ENCODE measurements at regions of chr3 and their contacts with region 1.

Region 1: DNA sequence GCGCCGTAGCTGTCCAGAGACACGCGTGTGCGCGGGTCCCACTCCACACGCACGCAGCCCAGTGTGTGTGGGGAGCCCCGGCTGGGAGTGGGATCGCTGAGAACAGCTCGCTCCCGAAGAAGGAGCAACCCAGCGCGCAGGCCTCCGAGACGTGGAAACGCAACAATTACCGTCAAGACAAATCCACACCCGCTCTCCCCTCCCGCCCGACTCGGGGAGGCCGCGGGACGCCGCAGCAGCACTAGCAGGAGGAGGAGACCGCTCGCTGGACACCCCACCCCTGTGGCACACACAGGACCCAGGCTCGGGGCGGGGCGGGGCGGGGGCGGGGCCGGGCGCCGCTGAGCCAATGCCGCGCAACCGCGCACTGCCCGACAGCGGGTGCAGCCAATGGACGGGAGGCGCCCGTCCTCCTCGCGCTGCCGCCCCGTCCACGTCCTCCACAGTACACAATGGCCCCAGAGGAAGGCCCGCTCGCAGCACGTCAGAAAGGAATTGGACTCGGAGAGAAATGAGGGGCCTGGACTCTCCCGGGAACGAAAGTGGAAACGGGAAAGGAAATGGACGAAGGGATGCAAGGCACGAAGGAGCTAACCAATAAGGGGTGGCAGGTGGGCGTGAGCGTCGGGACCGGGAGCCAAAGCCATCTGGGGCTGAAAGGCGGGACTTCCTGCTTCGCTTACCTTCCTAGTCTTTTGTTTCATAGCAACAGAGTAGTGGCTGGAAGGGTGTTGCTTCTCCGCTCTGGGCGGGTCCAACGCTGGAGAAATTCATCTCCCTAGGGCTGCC is at the start of gene CBLB:
- DNase-seq: peak; percentile 93
- ATAC-seq: peak; percentile 90
- H3K4me3 ChIP-seq: peak within 1 kb of the TSS; percentile 72 to 100 (median 97)
- H3K4me3 Mint-ChIP-seq: peak within 1 kb of the TSS; percentile 93
- H3K27ac ChIP-seq: peak within 1 kb of the TSS; percentile 68 to 73
- H3K27ac Mint-ChIP-seq: peak within 1 kb of the TSS; percentile 96
- H3K4me1 ChIP-seq: peaks cover 24 to 32% of the 10 kb centered on the region in 2 donors
- H3K4me1 Mint-ChIP-seq: peaks cover 48% of the 10 kb centered on the region
- H3K27me3 ChIP-seq: no peaks in the 10 kb centered on the region
- H3K27me3 Mint-ChIP-seq: no peaks in the 10 kb centered on the region
- CTCF ChIP-seq: no peak
- total RNA-seq, gene CBLB: 135 and 144 TPM in 2 replicates

Region 2: DNA sequence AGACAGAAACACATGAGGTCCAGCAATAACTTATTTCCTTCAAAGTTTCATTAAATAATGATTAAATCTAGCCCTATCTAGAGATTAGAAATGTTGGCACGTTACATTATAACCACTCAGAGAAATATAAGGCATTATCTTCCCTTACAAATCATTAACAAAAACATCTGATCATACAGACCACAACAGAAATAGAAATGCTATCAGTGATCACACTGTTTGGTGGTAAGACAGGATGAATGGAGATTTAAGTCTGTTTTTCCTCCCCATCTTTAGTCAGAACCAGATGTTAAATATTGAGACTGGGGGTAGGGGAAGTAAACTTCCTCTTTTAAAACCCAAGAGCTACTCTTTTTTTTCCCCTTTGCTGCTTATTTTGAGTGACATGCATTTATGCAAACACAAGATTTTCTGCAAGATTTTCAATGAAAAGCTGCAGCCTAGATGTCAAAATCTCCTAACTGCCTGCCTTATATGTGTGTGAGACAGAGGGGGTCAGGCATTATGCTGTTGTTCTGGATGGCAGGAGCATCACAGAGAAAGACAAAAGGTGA is 70.5 kb before region 1 on chr3:
- CTCF ChIA-PET with region 1: no interaction called
- POLR2A ChIA-PET with region 1: no interaction called
- intact Hi-C with region 1: loop called (anchors 2 kb)
- DNase-seq: peak; percentile 71
- ATAC-seq: peak; percentile 86
- H3K4me3 ChIP-seq: peak overlapping the region in 1 of 5 experiments; percentile 28
- H3K4me3 Mint-ChIP-seq: peak overlapping the region; percentile 66
- H3K27ac ChIP-seq: peak overlapping the region in 1 of 2 donors; percentile 53
- H3K27ac Mint-ChIP-seq: peak overlapping the region; percentile 70
- H3K4me1 ChIP-seq: peaks cover 37 to 61% of the 10 kb centered on the region in 2 donors
- H3K4me1 Mint-ChIP-seq: peaks cover 66% of the 10 kb centered on the region
- H3K27me3 ChIP-seq: no peaks in the 10 kb centered on the region
- H3K27me3 Mint-ChIP-seq: no peaks in the 10 kb centered on the region
- CTCF ChIP-seq: no peak

Region 3: GRCh38 chr3:105812194-105812586 is 56.7 kb before region 1 on chr3:
- CTCF ChIA-PET with region 1: no interaction called
- POLR2A ChIA-PET with region 1: no interaction called
- intact Hi-C with region 1: no loop called
- DNase-seq: no peak
- ATAC-seq: no peak
- H3K4me3 ChIP-seq: no peak overlapping the region
- H3K4me3 Mint-ChIP-seq: no peak overlapping the region
- H3K27ac ChIP-seq: no peak overlapping the region
- H3K27ac Mint-ChIP-seq: no peak overlapping the region
- H3K4me1 ChIP-seq: peaks cover 11 to 12% of the 10 kb centered on the region in 2 donors
- H3K4me1 Mint-ChIP-seq: peaks cover 44% of the 10 kb centered on the region
- H3K27me3 ChIP-seq: no peaks in the 10 kb centered on the region
- H3K27me3 Mint-ChIP-seq: no peaks in the 10 kb centered on the region
- CTCF ChIP-seq: no peak

Region 4: GRCh38 chr3:105853801-105854432 is 15.0 kb before region 1 on chr3:
- CTCF ChIA-PET with region 1: interaction called, 5 read pairs
- POLR2A ChIA-PET with region 1: interaction called, 3 read pairs
- intact Hi-C with region 1: loop called (anchors 1 kb)
- DNase-seq: peak; percentile 91
- ATAC-seq: peak; percentile 99
- H3K4me3 ChIP-seq: peak overlapping the region in 1 of 5 experiments; percentile 5
- H3K4me3 Mint-ChIP-seq: peak overlapping the region; percentile 74
- H3K27ac ChIP-seq: peak overlapping the region; percentile 94 to 95
- H3K27ac Mint-ChIP-seq: peak overlapping the region; percentile 97
- H3K4me1 ChIP-seq: peaks cover 43 to 49% of the 10 kb centered on the region in 2 donors
- H3K4me1 Mint-ChIP-seq: peaks cover 53% of the 10 kb centered on the region
- H3K27me3 ChIP-seq: no peaks in the 10 kb centered on the region
- H3K27me3 Mint-ChIP-seq: no peaks in the 10 kb centered on the region
- CTCF ChIP-seq: peak; percentile 20

Region 5: GRCh38 chr3:106176734-106177133 is 307.8 kb after region 1 on chr3:
- CTCF ChIA-PET with region 1: no interaction called
- POLR2A ChIA-PET with region 1: no interaction called
- intact Hi-C with region 1: loop called (anchors 5 kb)
- DNase-seq: peak; percentile 46
- ATAC-seq: peak; percentile 85
- H3K4me3 ChIP-seq: peak overlapping the region in 4 of 5 experiments; percentile 35 to 44 (median 38)
- H3K4me3 Mint-ChIP-seq: peak overlapping the region; percentile 83
- H3K27ac ChIP-seq: peak overlapping the region; percentile 30 to 68
- H3K27ac Mint-ChIP-seq: peak overlapping the region; percentile 78
- H3K4me1 ChIP-seq: peaks cover 7 to 20% of the 10 kb centered on the region in 2 donors
- H3K4me1 Mint-ChIP-seq: peaks cover 26% of the 10 kb centered on the region
- H3K27me3 ChIP-seq: no peaks in the 10 kb centered on the region
- H3K27me3 Mint-ChIP-seq: no peaks in the 10 kb centered on the region
- CTCF ChIP-seq: no peak